CD8-positive, alpha-beta T cell (primary cell): ENCODE measurements at regions of chr6 and their contacts with region 1.

Region 1: DNA sequence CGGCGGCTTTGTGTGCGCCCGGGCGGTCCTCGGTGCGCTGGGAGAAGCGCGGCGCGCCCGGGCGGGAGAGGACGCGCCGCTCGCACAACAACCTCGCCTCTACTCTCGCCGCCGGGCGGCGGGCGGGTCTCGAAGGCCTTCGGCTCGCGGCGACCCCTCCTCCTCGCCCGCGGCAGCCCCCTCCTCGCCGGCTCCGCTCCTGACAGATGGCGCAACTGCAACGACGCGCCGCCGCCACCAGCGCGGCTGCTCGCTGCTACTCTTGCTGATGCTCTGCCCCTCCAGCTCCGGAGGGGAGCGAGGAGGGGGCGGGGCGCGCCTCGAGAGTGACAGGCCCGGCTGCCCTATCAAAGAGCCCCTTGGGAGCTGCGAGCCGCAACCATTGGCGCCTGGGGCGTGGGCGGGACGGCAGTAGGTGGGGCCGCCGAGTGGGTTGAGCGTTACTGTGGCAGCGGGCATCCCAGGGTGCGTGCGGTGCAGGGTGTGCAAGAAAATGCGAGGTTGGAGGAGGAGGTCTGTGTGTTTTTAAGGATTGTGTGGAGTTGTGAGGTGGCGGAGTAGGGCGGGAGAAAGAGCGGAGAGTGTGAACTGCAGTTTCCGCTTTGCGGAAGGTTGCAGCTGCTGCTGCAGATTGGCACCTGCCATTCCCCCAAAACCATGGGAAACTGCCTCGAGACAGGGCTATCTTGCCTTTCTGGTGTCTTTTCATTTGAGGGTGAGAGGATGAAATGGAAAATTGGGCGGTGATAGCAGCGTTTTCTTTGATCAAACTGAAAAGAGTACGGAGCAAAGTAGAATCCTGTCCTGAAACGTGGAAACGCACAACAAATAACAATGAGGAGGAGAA is at the start of gene FYN:
- DNase-seq: peak; percentile 97 to 99 (median 98)
- ATAC-seq: peak; percentile 87
- H3K4me3 ChIP-seq: peak within 1 kb of the TSS; percentile 91 to 94
- H3K4me3 Mint-ChIP-seq: peak within 1 kb of the TSS; percentile 97
- H3K27ac ChIP-seq: peak within 1 kb of the TSS; percentile 86 to 91
- H3K27ac Mint-ChIP-seq: peak within 1 kb of the TSS; percentile 98
- H3K4me1 ChIP-seq: peaks cover 35% of the 10 kb centered on the region
- H3K4me1 Mint-ChIP-seq: peaks cover 41% of the 10 kb centered on the region
- H3K27me3 ChIP-seq: no peaks in the 10 kb centered on the region
- H3K27me3 Mint-ChIP-seq: no peaks in the 10 kb centered on the region
- CTCF ChIP-seq: peak; percentile 42
- total RNA-seq, gene FYN: 479 to 483 TPM

Region 2: DNA sequence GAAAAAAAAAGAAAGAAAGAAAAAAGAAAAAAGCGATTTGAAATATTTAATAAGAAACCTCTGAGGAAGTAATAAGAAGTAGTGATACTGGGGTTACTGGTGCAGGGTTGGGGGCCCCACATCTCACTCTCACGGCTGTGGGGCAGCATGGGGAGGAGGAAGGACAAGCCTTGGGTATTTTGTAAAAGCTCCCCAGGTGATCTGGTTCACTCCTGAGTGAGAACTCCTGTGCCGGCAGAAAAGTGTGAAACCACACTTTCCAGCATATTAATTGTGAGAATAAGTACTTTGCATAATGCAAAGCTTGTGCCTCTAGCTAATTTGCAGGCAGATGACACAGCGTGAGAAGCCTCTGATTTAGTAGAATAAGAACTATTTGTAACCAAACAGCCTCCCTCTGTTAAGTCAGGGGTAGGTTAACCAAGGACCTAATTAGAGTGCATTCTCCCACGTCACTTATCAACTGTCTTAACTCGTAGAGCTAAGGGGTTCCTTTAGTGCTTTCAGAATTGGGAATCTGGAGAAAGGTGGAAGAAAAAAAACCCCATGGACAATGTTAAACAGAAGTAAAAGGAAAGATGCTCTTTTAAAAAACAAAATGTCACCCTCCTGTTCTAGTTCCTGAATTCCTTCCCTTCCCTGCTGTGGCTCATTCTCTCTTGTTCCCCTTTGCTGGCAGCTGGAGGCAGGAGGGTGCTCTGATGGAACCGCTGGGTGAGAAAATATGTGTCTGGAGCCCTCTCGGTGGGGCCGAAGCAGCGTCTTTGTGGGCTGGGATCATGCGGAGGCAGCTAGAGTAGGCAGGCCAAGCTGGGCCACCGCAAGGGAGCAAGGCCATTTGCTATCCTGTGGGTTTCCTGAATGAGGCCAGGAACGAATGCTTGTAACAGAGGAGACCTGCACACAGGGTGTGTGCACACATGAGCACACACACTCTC is 108.9 kb before region 1 on chr6:
- CTCF ChIA-PET with region 1: interaction called, 4 read pairs
- POLR2A ChIA-PET with region 1: interaction called, 7 read pairs
- intact Hi-C with region 1: loop called (anchors 2 to 5 kb)
- DNase-seq: peak in 7 of 9 experiments; percentile 45 to 92 (median 70)
- ATAC-seq: peak; percentile 41
- H3K4me3 ChIP-seq: peak overlapping the region in 1 of 2 experiments; percentile 4
- H3K4me3 Mint-ChIP-seq: peak overlapping the region; percentile 70
- H3K27ac ChIP-seq: peak overlapping the region; percentile 41 to 99
- H3K27ac Mint-ChIP-seq: peak overlapping the region; percentile 99
- H3K4me1 ChIP-seq: peaks cover 98% of the 10 kb centered on the region
- H3K4me1 Mint-ChIP-seq: peaks cover 99% of the 10 kb centered on the region
- H3K27me3 ChIP-seq: no peaks in the 10 kb centered on the region
- H3K27me3 Mint-ChIP-seq: no peaks in the 10 kb centered on the region
- CTCF ChIP-seq: no peak

Region 3: GRCh38 chr6:111832833-111833418 is 40.5 kb before region 1 on chr6:
- CTCF ChIA-PET with region 1: no interaction called
- POLR2A ChIA-PET with region 1: interaction called, 3 read pairs
- intact Hi-C with region 1: loop called in 1 of 2 experiments (anchors 5 kb)
- DNase-seq: peak in 1 of 9 experiments; percentile 44
- ATAC-seq: no peak
- H3K4me3 ChIP-seq: no peak overlapping the region
- H3K4me3 Mint-ChIP-seq: peak overlapping the region; percentile 52
- H3K27ac ChIP-seq: peak overlapping the region in 1 of 2 experiments; percentile 49
- H3K27ac Mint-ChIP-seq: peak overlapping the region; percentile 85
- H3K4me1 ChIP-seq: peaks cover 49% of the 10 kb centered on the region
- H3K4me1 Mint-ChIP-seq: peaks cover 86% of the 10 kb centered on the region
- H3K27me3 ChIP-seq: no peaks in the 10 kb centered on the region
- H3K27me3 Mint-ChIP-seq: no peaks in the 10 kb centered on the region
- CTCF ChIP-seq: no peak

Region 4: GRCh38 chr6:111850295-111850937 is 23.0 kb before region 1 on chr6:
- CTCF ChIA-PET with region 1: interaction called, 5 read pairs
- POLR2A ChIA-PET with region 1: interaction called, 3 read pairs
- intact Hi-C with region 1: loop called (anchors 1 kb)
- DNase-seq: peak in 2 of 9 experiments; percentile 57 to 74
- ATAC-seq: peak; percentile 57
- H3K4me3 ChIP-seq: no peak overlapping the region
- H3K4me3 Mint-ChIP-seq: peak overlapping the region; percentile 40
- H3K27ac ChIP-seq: peak overlapping the region in 1 of 2 experiments; percentile 29
- H3K27ac Mint-ChIP-seq: peak overlapping the region; percentile 85
- H3K4me1 ChIP-seq: peaks cover 97% of the 10 kb centered on the region
- H3K4me1 Mint-ChIP-seq: peaks cover 65% of the 10 kb centered on the region
- H3K27me3 ChIP-seq: no peaks in the 10 kb centered on the region
- H3K27me3 Mint-ChIP-seq: no peaks in the 10 kb centered on the region
- CTCF ChIP-seq: no peak

Region 5: DNA sequence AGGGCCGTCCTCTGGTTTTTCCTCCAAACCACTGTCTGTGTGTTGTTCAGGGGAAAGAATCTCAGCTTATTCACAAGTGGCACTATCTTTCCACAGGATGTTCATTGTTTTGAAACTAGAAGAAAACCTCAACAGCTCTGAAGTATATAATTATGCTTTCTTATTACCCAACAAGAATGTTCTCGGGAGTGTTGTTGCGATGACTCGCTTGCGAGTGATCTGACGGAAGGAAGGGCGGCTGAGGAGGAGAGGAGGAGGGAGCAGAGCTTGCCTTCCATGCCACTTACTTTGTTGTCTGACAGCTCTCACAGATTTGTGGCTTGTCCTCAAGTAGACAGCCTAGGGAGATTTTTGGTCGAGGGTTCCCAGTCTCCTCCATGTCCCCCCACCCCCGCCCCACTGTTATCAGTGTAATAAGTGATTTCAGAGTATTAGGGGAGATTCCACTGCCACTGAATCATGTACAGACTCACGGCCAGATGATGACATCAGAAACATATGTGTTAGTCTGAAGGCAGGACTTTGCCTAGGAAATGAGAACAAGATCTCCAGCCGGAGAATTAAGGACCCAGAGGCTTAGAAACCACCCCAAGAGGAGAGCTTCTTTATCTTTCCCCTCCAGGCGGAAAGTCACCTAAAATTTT is 99.8 kb after region 1 on chr6:
- CTCF ChIA-PET with region 1: interaction called, 5 read pairs
- POLR2A ChIA-PET with region 1: interaction called, 5 read pairs
- intact Hi-C with region 1: loop called (anchors 1 to 5 kb)
- DNase-seq: peak; percentile 22 to 86 (median 69)
- ATAC-seq: peak; percentile 92
- H3K4me3 ChIP-seq: no peak overlapping the region
- H3K4me3 Mint-ChIP-seq: peak overlapping the region; percentile 56
- H3K27ac ChIP-seq: peak overlapping the region; percentile 71 to 78
- H3K27ac Mint-ChIP-seq: peak overlapping the region; percentile 97
- H3K4me1 ChIP-seq: peaks cover 70% of the 10 kb centered on the region
- H3K4me1 Mint-ChIP-seq: peaks cover 69% of the 10 kb centered on the region
- H3K27me3 ChIP-seq: no peaks in the 10 kb centered on the region
- H3K27me3 Mint-ChIP-seq: no peaks in the 10 kb centered on the region
- CTCF ChIP-seq: no peak

Region 6: GRCh38 chr6:111997078-111997852 is 123.9 kb after region 1 on chr6:
- CTCF ChIA-PET with region 1: interaction called, 7 read pairs
- POLR2A ChIA-PET with region 1: interaction called, 7 read pairs
- intact Hi-C with region 1: loop called (anchors 1 to 2 kb)
- DNase-seq: peak; percentile 59 to 91 (median 82)
- ATAC-seq: peak; percentile 71
- H3K4me3 ChIP-seq: peak overlapping the region in 1 of 2 experiments; percentile 13
- H3K4me3 Mint-ChIP-seq: peak overlapping the region; percentile 71
- H3K27ac ChIP-seq: no peak overlapping the region
- H3K27ac Mint-ChIP-seq: peak overlapping the region; percentile 89
- H3K4me1 ChIP-seq: peaks cover 37% of the 10 kb centered on the region
- H3K4me1 Mint-ChIP-seq: peaks cover 45% of the 10 kb centered on the region
- H3K27me3 ChIP-seq: no peaks in the 10 kb centered on the region
- H3K27me3 Mint-ChIP-seq: no peaks in the 10 kb centered on the region
- CTCF ChIP-seq: peak; percentile 98

Region 7: DNA sequence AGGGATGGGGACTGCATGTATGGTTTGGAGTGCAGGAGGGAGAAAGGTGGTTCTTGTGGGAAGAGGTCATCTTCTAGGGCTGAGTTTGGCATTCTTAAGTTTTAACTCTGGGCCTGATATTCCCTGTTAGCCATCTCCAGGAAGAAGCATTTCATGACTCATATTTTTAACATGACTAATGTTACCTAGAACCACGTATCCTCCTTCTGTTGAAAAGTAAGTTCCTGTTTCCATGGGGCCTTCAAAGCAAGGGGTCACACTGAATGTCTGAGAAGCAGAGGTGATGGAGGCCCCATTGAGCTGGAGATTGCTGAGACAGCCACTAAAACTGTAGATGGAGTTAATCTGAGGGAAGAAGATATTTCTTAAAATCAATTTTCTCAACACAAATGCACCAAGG is 244.2 kb after region 1 on chr6:
- CTCF ChIA-PET with region 1: no interaction called
- POLR2A ChIA-PET with region 1: no interaction called
- intact Hi-C with region 1: no loop called
- DNase-seq: no peak
- ATAC-seq: no peak
- H3K4me3 ChIP-seq: no peak overlapping the region
- H3K4me3 Mint-ChIP-seq: no peak overlapping the region
- H3K27ac ChIP-seq: no peak overlapping the region
- H3K27ac Mint-ChIP-seq: no peak overlapping the region
- H3K4me1 ChIP-seq: no peaks in the 10 kb centered on the region
- H3K4me1 Mint-ChIP-seq: no peaks in the 10 kb centered on the region
- H3K27me3 ChIP-seq: no peaks in the 10 kb centered on the region
- H3K27me3 Mint-ChIP-seq: peaks cover 16% of the 10 kb centered on the region
- CTCF ChIP-seq: no peak